ENCODE measurements at regions of chr14 and their contacts with region 1.

Region 1: GRCh38 chr14:75088574-75089373 is 19.3 kb downstream of the ZC2HC1C start:
- DNase-seq: peak in 1 of 2 experiments; percentile 67
- H3K4me3 ChIP-seq: no peak overlapping the region
- H3K27ac ChIP-seq: no peak overlapping the region
- H3K4me1 ChIP-seq: no peaks in the 10 kb centered on the region; a peak in 2 of 7 replicates
- H3K27me3 ChIP-seq: no peaks in the 10 kb centered on the region
- CTCF ChIP-seq: peak in 2 of 3 experiments; percentile 77 to 86; a peak in 3 of 4 replicates
- EP300 ChIP-seq: no peak
- POLR2A ChIP-seq: no peak
- RAD21 ChIP-seq: peak; percentile 90 to 91

Region 2: DNA sequence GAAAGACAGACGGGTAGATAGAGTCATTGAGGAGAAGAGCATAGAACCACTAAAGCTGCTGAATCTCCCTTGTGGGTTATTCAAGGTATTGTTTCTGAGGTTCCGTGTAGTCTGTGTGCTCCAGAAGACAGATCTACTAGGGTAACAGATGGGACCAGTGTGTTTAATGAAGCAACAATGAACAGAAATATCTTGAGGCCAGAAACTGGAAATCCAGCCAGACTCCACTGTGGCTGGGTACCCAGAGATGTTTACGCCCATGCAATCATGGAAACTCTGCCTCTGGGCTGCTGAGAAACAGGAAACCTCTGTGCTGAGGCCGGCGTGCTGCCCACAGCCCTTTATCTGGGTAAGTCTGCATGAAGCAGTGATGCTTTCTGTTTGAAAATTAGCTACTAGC is 221.1 kb before region 1 on chr14:
- CTCF ChIA-PET with region 1: interaction called, 11 read pairs
- POLR2A ChIA-PET with region 1: no interaction called
- DNase-seq: no peak
- H3K4me3 ChIP-seq: no peak overlapping the region
- H3K27ac ChIP-seq: no peak overlapping the region
- H3K4me1 ChIP-seq: no peaks in the 10 kb centered on the region
- H3K27me3 ChIP-seq: no peaks in the 10 kb centered on the region
- CTCF ChIP-seq: no peak
- EP300 ChIP-seq: no peak
- POLR2A ChIP-seq: no peak
- RAD21 ChIP-seq: no peak

Region 3: DNA sequence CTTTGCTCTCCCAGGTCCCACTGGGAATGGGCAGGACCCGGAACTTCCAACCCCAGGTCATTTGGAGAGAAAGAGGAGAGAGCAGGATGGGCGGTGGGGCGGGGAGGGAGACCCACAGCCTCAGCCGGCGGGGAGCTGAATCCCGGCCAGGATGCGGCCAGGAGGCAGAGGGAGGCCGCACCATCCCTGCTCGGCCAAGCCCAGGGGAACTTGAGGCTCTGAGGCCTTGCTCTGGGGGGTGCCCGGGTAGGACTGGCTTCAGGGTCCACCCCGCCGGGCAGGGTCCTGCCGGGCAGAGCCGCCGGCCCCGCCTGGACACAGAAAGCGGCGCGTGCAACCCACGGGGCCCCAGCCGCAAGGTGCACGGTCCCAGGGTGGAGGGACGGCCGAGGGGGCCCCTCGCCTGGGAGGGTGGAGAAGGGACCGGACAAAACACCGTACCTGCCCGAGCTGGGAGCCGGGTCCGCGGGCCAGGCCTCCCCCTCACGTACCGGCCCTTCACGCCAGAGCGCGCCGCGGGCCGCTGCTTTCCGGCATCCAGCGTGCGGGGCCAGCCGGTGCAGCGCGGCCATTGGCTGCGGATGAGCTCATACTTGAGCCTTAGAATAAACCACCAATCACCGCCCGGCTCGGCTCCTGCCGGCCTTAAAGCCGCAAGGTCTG is 165.9 kb before region 1 on chr14 and contains the start of gene RPS6KL1:
- CTCF ChIA-PET with region 1: interaction called, 15 read pairs
- POLR2A ChIA-PET with region 1: interaction called, 3 read pairs
- DNase-seq: peak; percentile 50 to 86
- H3K4me3 ChIP-seq: peak within 1 kb of the TSS; percentile 49 to 78 (median 68)
- H3K27ac ChIP-seq: no peak within 1 kb of the TSS
- H3K4me1 ChIP-seq: no peaks in the 10 kb centered on the region
- H3K27me3 ChIP-seq: 0 out of 7 replicates have a peak, but pooled peaks cover 0 to 2% (median 0%) of the 10 kb centered on the region in 4 experiments
- CTCF ChIP-seq: no peak
- EP300 ChIP-seq: no peak
- POLR2A ChIP-seq: peak in 1 of 2 experiments; percentile 80; a peak in 2 of 3 replicates
- RAD21 ChIP-seq: no peak
- total RNA-seq, gene RPS6KL1: 11.3 and 13.8 TPM in 2 replicates

Region 4: DNA sequence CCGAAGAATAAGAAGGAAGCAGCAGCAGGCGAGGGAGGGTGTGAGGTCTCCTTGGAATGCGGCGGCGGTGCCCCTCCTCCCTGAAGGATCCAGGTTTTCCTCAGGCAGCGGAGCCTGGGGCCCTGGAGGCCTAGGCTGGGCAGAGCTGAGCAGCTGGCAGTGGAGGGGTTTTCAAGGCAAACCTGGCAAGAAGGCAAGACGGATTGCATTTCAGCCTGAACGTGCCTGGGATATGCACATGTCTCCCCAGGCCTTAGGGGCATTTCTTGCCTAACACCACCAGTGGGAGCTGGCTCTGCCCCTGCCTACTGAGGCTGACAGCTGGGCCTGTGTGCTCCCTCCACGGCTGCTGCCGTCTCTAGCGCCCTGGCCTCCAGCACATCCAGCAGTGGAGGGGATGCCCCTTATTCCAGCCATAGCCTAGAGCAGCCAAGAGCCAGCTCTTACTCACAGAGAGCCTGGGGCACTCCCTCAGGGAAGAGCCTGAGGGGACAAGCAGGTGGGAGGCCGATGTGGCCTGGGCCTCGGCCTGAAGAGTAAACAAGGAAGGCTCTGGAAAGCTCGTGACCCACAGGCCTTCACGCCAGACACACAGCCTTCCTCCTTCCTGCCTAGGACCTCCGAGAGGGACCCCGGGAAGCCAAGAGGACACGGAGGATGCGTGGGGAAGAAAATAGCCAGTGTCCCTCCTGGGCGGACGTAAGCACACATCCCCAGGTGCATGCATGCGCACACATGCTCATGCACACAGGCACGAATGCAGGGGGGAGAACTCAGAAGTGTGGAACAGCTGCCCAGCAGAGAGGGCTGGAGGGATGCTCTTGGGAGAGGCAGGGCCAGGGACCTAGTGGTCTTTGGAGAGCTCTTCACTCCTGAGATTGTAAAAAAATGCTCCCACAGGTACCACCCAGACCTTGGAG is 109.1 kb before region 1 on chr14:
- CTCF ChIA-PET with region 1: interaction called, 12 read pairs
- POLR2A ChIA-PET with region 1: interaction called, 3 read pairs
- DNase-seq: peak in 1 of 2 experiments; percentile 66
- H3K4me3 ChIP-seq: no peak overlapping the region
- H3K27ac ChIP-seq: no peak overlapping the region
- H3K4me1 ChIP-seq: peaks cover 0 to 28% (median 23%) of the 10 kb centered on the region in 4 experiments; a peak in 6 of 7 replicates
- H3K27me3 ChIP-seq: peaks cover 0 to 2% (median 1%) of the 10 kb centered on the region in 4 experiments; a peak in 1 of 7 replicates
- CTCF ChIP-seq: peak in 2 of 3 experiments; percentile 5 to 44; a peak in 1 of 4 replicates
- EP300 ChIP-seq: no peak
- POLR2A ChIP-seq: no peak
- RAD21 ChIP-seq: peak in 1 of 2 experiments; percentile 21; a peak in 1 of 4 replicates

Region 5: GRCh38 chr14:75044322-75044721 is 44.5 kb before region 1 on chr14:
- CTCF ChIA-PET with region 1: interaction called, 13 read pairs
- POLR2A ChIA-PET with region 1: no interaction called
- DNase-seq: no peak
- H3K4me3 ChIP-seq: no peak overlapping the region
- H3K27ac ChIP-seq: no peak overlapping the region
- H3K4me1 ChIP-seq: no peaks in the 10 kb centered on the region
- H3K27me3 ChIP-seq: no peaks in the 10 kb centered on the region
- CTCF ChIP-seq: no peak
- EP300 ChIP-seq: no peak
- POLR2A ChIP-seq: no peak
- RAD21 ChIP-seq: no peak

Region 6: DNA sequence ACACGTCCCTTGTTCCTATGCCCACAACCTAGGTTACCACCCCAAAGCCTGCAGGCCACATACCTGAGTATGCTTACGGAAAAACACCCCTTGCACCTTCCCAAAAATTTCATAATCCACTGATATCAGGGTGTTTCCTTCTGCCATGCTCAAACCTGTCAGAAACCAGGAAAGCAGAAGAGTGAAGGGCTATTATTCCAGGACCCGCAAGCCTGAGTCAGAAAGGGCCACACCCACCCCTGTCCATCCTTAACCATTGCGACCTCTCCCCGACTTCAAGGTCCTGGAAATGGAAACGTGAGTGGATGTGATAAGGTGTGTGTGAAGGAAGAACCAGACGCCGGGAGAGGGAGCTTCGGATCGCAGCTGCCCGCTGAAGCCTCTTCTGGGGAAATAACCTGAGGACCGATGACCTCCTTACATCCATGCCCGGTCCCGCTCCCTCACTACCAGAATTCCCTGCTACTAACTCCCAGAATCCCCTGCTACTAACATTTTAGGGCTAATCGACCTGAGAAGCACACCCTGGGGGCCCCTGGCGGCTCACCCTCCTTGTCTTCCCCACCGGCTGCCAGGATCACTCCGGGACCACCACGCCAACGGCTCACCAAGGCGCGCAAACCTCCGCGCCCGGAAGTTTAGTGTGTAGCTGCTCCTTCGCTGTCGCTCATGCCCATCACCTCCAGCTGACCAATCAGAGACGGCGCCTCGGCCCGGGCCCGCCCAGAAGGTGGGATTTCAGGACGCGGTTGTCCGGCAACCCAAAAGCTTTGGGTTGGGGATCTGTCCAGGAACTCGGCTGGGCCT is 25.2 kb before region 1 on chr14 and contains the start of gene ACYP1:
- CTCF ChIA-PET with region 1: interaction called, 39 read pairs
- POLR2A ChIA-PET with region 1: interaction called, 6 read pairs
- DNase-seq: peak; percentile 80 to 99
- H3K4me3 ChIP-seq: peak within 1 kb of the TSS; percentile 70 to 87 (median 79)
- H3K27ac ChIP-seq: no peak within 1 kb of the TSS
- H3K4me1 ChIP-seq: no peaks in the 10 kb centered on the region; a peak in 2 of 7 replicates
- H3K27me3 ChIP-seq: no peaks in the 10 kb centered on the region
- CTCF ChIP-seq: no peak
- EP300 ChIP-seq: no peak
- POLR2A ChIP-seq: peak in 1 of 2 experiments; percentile 48; a peak in 1 of 3 replicates
- RAD21 ChIP-seq: no peak
- total RNA-seq, gene ACYP1: 17.7 and 24.8 TPM in 2 replicates

Region 7: GRCh38 chr14:75109877-75110276 is 21.1 kb after region 1 on chr14:
- CTCF ChIA-PET with region 1: interaction called, 10 read pairs
- POLR2A ChIA-PET with region 1: interaction called, 3 read pairs
- DNase-seq: no peak
- H3K4me3 ChIP-seq: no peak overlapping the region
- H3K27ac ChIP-seq: no peak overlapping the region
- H3K4me1 ChIP-seq: no peaks in the 10 kb centered on the region
- H3K27me3 ChIP-seq: no peaks in the 10 kb centered on the region
- CTCF ChIP-seq: no peak
- EP300 ChIP-seq: no peak
- POLR2A ChIP-seq: no peak
- RAD21 ChIP-seq: no peak

Region 8: DNA sequence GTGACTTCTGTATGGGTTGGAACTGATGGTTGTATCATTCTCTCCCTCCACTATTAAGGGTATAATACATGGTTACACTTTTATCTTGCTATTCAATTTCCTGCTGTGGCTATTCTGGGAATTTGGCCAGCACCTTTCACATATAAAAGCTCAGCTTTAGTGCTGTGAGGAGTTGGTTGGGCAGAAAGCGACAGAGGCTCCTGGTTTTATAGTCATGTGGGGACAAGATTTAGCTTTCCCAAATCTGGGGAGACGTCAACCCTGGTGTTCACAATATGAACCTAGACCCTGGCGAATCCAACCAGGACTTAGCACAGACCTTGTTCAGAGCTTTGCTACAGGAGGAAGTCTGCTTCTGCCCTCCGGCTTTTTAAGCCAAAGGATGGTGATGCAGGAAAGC is 226.4 kb after region 1 on chr14:
- CTCF ChIA-PET with region 1: no interaction called
- POLR2A ChIA-PET with region 1: no interaction called
- DNase-seq: no peak
- H3K4me3 ChIP-seq: no peak overlapping the region
- H3K27ac ChIP-seq: no peak overlapping the region
- H3K4me1 ChIP-seq: peaks cover 0 to 4% (median 2%) of the 10 kb centered on the region in 4 experiments; a peak in 4 of 7 replicates
- H3K27me3 ChIP-seq: no peaks in the 10 kb centered on the region
- CTCF ChIP-seq: no peak
- EP300 ChIP-seq: no peak
- POLR2A ChIP-seq: no peak
- RAD21 ChIP-seq: no peak

Measured in H1 (cell line).